Activated CD8-positive, alpha-beta T cell treated with anti-CD3 and anti-CD28 coated beads, Interleukin-2, amount 10 ng/mL, durations not matched to agents 7 days and 5 days (primary cell): ENCODE measurements at regions of chr4 and their contacts with region 1.

Region 1: GRCh38 chr4:152640058-152640833 is 39.6 kb downstream of the TMEM154 start:
- DNase-seq: no peak
- ATAC-seq: no peak
- H3K4me3 Mint-ChIP-seq: no peak overlapping the region
- H3K27ac Mint-ChIP-seq: no peak overlapping the region
- H3K4me1 Mint-ChIP-seq: peaks cover 16% of the 10 kb centered on the region
- H3K27me3 Mint-ChIP-seq: no peaks in the 10 kb centered on the region

Region 2: DNA sequence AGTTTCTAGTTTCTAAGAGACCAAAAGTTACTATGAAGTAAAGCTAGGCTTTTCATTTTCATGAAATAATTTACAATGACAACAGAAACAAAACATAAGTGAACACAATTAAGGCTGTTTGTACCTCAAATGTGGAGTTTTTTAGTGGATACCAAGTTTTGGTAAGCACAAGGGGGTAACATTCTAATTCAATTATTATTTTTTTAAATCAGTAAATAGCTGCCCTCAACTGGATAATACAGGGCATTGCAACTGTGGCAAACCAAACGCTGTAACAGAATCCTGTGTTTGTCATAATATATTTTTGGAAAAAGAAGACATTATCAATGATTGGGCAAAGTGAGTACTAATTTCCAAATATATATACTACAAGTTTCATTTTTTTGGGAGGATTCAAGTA is 254.7 kb before region 1 on chr4:
- CTCF ChIA-PET with region 1: no interaction called
- POLR2A ChIA-PET with region 1: no interaction called
- DNase-seq: no peak
- ATAC-seq: no peak
- H3K4me3 Mint-ChIP-seq: no peak overlapping the region
- H3K27ac Mint-ChIP-seq: no peak overlapping the region
- H3K4me1 Mint-ChIP-seq: peaks cover 8% of the 10 kb centered on the region
- H3K27me3 Mint-ChIP-seq: no peaks in the 10 kb centered on the region

Region 3: DNA sequence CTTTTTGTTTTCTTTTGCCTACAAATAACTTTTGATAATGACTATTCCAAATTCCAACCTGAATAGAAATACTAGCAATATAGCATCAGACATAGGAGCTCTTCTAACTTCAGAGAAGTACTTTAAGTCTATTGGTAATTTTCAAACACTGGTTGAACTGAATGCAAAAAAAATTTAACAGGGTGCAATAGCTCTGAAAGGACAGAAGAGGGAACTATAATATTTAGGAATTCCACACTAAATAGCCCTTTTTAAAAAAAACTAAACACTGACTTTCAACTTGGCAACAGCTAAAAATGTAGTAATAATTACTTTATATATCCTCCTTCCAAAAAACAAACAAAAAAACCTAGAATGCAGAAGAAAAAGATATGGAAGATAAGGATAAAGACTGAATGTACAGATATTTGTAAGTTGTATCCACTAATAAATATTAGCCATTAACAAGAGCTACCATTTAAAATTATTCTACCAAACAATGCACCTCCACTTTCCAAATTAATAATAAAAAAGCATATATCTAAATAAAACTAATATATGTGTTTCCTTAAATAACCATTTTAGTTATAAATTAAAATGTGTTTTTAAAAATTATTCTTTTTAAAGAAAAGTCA is 185.7 kb before region 1 on chr4:
- CTCF ChIA-PET with region 1: interaction called, 24 read pairs
- POLR2A ChIA-PET with region 1: no interaction called
- DNase-seq: no peak
- ATAC-seq: no peak
- H3K4me3 Mint-ChIP-seq: no peak overlapping the region
- H3K27ac Mint-ChIP-seq: no peak overlapping the region
- H3K4me1 Mint-ChIP-seq: peaks cover 29% of the 10 kb centered on the region
- H3K27me3 Mint-ChIP-seq: no peaks in the 10 kb centered on the region

Region 4: GRCh38 chr4:152485726-152486276 is 154.4 kb before region 1 on chr4:
- CTCF ChIA-PET with region 1: interaction called, 10 read pairs
- POLR2A ChIA-PET with region 1: no interaction called
- DNase-seq: peak; percentile 71
- ATAC-seq: peak; percentile 99
- H3K4me3 Mint-ChIP-seq: peak overlapping the region; percentile 54
- H3K27ac Mint-ChIP-seq: peak overlapping the region; percentile 70
- H3K4me1 Mint-ChIP-seq: peaks cover 35% of the 10 kb centered on the region
- H3K27me3 Mint-ChIP-seq: no peaks in the 10 kb centered on the region